Activated CD4-positive, alpha-beta memory T cell treated with anti-CD3 and anti-CD28 coated beads for 36 hours (primary cell): ENCODE measurements at regions of chr6 and their contacts with region 1.

Region 1: GRCh38 chr6:90266905-90267621 is 29.6 kb downstream of the BACH2 start:
- DNase-seq: no peak
- H3K4me3 Mint-ChIP-seq: peak overlapping the region; percentile 6
- H3K27ac Mint-ChIP-seq: peak overlapping the region; percentile 77
- H3K4me1 Mint-ChIP-seq: peaks cover 87% of the 10 kb centered on the region
- H3K27me3 Mint-ChIP-seq: no peaks in the 10 kb centered on the region

Region 2: DNA sequence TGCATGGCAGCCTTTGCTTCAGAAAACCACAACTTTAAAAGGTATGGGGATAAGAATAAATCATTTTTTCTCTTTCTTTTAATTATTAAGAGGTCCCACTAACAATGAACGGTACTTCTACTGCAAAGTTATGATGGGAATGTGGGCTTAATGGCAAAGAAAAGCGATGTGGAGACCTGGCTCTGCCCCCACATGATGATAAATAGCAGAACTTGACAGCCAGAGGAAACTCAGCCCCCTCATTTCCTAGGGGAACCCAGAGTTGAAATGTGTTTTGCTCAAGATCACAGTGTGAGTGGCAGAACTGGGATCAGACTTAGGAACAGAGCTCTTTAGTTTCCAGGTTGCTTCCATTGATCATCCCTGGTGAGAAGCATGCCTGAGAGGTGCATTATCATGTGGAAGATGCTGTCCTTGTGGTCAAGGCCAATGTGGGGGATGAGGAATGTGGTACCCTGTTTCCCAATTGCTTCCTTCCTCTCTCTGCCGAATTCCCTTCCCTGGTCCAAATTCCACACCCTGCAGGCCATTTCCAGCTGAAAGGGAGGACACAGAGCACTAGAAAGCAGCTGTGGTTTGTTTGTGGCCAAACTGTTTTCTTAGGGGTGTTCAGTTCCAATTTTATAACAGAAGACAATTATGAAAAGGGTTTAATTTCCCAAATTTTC is 36.4 kb before region 1 on chr6:
- CTCF ChIA-PET with region 1: no interaction called
- POLR2A ChIA-PET with region 1: no interaction called
- intact Hi-C with region 1: loop called (anchors 2 kb)
- DNase-seq: no peak
- H3K4me3 Mint-ChIP-seq: no peak overlapping the region
- H3K27ac Mint-ChIP-seq: no peak overlapping the region
- H3K4me1 Mint-ChIP-seq: peaks cover 88% of the 10 kb centered on the region
- H3K27me3 Mint-ChIP-seq: no peaks in the 10 kb centered on the region

Region 3: DNA sequence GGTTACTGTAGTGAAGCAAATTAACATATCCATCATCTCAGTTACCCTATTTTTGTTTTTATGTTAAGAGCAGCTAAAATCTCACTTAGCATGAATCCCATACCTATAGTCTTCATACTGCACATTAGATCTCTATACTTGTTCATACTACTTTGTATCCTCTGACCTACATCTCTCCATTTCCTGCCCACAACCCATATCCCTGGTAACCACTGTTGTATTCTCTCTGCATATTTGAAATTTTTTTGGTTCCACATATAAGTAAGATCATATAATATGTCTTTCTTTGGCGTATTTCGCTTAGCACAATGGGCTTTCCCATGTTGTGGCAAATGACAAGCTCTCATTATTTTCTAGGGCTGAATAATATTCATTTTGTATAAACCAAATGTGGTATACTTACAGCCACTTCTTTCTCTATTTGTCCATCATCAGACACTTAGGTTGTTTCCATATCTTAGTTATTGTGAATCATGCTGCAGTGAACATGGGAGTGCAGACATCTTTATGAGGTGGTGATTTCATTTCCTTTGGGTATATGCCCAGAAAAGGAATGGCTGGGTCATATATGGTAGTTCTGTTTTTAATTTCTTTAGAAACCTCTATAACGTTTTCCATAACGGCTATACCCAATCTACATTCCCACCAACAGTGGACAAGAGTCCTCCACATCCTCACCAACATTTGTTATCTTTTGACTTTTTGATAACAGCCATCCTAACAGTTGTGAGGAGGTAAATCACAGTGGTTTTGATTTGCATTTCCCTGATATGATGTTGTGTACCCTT is 10.2 kb before region 1 on chr6:
- CTCF ChIA-PET with region 1: no interaction called
- POLR2A ChIA-PET with region 1: interaction called, 5 read pairs
- intact Hi-C with region 1: loop called (anchors 1 kb)
- DNase-seq: no peak
- H3K4me3 Mint-ChIP-seq: no peak overlapping the region
- H3K27ac Mint-ChIP-seq: peak overlapping the region; percentile 87
- H3K4me1 Mint-ChIP-seq: peaks cover 83% of the 10 kb centered on the region
- H3K27me3 Mint-ChIP-seq: no peaks in the 10 kb centered on the region

Region 4: GRCh38 chr6:90296346-90297114 is 29.5 kb after region 1 on chr6 and contains the start of gene BACH2:
- CTCF ChIA-PET with region 1: no interaction called
- POLR2A ChIA-PET with region 1: no interaction called
- intact Hi-C with region 1: no loop called
- DNase-seq: peak; percentile 97
- H3K4me3 Mint-ChIP-seq: peak within 1 kb of the TSS; percentile 79
- H3K27ac Mint-ChIP-seq: peak within 1 kb of the TSS; percentile 86
- H3K4me1 Mint-ChIP-seq: peaks cover 32% of the 10 kb centered on the region
- H3K27me3 Mint-ChIP-seq: peaks cover 9% of the 10 kb centered on the region
- total RNA-seq, gene BACH2: 49.2 to 55.4 TPM

Region 5: DNA sequence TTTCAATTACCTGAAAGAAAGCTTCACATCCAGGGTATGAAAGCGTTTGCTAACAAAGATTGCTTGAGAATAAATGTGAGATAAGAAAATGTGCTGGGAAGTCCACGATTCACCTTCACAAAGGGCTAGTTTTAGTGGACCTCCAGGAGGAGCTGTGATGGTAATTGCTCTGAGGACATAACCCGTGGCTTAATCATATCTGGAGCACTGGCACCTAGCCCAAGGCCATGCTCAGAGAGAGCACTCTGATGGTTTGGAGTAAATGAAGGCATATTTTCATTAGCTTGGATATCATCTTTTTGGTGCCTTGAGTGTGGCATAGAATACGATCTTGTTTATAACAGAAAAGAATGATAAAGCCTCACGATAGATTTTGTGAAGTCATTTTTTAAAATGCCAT is 76.5 kb after region 1 on chr6:
- CTCF ChIA-PET with region 1: no interaction called
- POLR2A ChIA-PET with region 1: no interaction called
- intact Hi-C with region 1: no loop called
- DNase-seq: no peak
- H3K4me3 Mint-ChIP-seq: no peak overlapping the region
- H3K27ac Mint-ChIP-seq: no peak overlapping the region
- H3K4me1 Mint-ChIP-seq: peaks cover 17% of the 10 kb centered on the region
- H3K27me3 Mint-ChIP-seq: no peaks in the 10 kb centered on the region